ENCODE measurements at regions of chr14 and their contacts with region 1.

Region 1: DNA sequence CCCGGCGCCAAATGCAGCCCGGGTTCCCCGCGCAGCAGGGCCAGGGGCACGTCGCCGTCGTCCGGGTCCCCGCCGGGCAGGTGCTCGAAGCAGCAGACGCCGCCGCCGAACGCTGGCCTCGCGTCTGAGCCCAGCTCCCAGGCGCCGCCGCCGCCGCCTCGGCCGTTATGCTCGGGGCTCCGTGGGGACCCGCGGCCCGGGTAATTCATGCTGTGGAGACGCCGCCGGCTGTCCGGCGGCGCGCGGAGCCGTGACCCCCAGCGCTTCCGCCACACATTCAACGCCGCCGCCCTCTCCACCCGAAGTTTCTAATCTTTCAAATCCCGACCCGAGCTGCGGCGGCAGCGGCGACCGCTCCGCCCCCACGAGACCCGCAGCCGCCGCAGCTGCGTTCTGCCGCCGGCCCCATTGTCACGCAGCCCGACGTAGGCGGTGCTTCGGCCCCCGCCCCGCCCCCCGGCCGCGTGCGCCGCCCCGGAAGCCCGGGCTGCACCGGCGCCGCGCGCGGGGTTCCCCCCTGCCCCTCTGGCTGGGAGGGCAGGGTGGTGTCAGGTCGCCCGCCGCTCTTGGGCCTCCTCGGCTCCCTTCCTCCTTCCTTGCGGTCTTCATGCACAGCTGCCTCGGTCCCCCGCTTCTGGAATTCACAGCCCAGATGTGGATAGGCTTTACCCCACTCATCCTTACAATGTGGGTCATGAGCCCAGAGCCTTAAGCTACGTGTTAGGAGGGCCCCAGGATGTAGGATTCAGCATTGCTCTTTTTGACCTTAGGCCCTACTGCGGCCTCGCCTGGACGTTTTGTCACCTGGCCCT is at the start of gene DDHD1:
- DNase-seq: peak; percentile 33 to 85
- H3K4me3 ChIP-seq: peak within 1 kb of the TSS; percentile 72 to 86 (median 78)
- H3K27ac ChIP-seq: no peak within 1 kb of the TSS
- H3K4me1 ChIP-seq: peaks cover 0 to 3% (median 2%) of the 10 kb centered on the region in 4 experiments; a peak in 4 of 7 replicates
- H3K27me3 ChIP-seq: no peaks in the 10 kb centered on the region; a peak in 1 of 7 replicates
- CTCF ChIP-seq: no peak
- EP300 ChIP-seq: no peak
- POLR2A ChIP-seq: peak; percentile 55 to 80
- RAD21 ChIP-seq: no peak
- total RNA-seq, gene DDHD1: 14.0 and 16.0 TPM in 2 replicates

Region 2: GRCh38 chr14:52950898-52951689 is 202.0 kb before region 1 on chr14 and contains the start of gene FERMT2:
- CTCF ChIA-PET with region 1: no interaction called
- POLR2A ChIA-PET with region 1: interaction called, 10 read pairs
- DNase-seq: peak in 1 of 2 experiments; percentile 91
- H3K4me3 ChIP-seq: peak within 1 kb of the TSS; percentile 66 to 99 (median 96)
- H3K27ac ChIP-seq: peak within 1 kb of the TSS; percentile 96
- H3K4me1 ChIP-seq: peaks cover 3 to 9% (median 5%) of the 10 kb centered on the region in 4 experiments; a peak in 5 of 7 replicates
- H3K27me3 ChIP-seq: no peaks in the 10 kb centered on the region
- CTCF ChIP-seq: no peak
- EP300 ChIP-seq: no peak
- POLR2A ChIP-seq: peak; percentile 23 to 49; a peak in 1 of 3 replicates
- RAD21 ChIP-seq: no peak
- total RNA-seq, gene FERMT2: 120 and 142 TPM in 2 replicates

Region 3: GRCh38 chr14:53124786-53125185 is 28.3 kb before region 1 on chr14:
- CTCF ChIA-PET with region 1: no interaction called
- POLR2A ChIA-PET with region 1: no interaction called
- DNase-seq: no peak
- H3K4me3 ChIP-seq: no peak overlapping the region
- H3K27ac ChIP-seq: no peak overlapping the region
- H3K4me1 ChIP-seq: no peaks in the 10 kb centered on the region
- H3K27me3 ChIP-seq: no peaks in the 10 kb centered on the region
- CTCF ChIP-seq: no peak
- EP300 ChIP-seq: no peak
- POLR2A ChIP-seq: no peak
- RAD21 ChIP-seq: no peak

Region 4: DNA sequence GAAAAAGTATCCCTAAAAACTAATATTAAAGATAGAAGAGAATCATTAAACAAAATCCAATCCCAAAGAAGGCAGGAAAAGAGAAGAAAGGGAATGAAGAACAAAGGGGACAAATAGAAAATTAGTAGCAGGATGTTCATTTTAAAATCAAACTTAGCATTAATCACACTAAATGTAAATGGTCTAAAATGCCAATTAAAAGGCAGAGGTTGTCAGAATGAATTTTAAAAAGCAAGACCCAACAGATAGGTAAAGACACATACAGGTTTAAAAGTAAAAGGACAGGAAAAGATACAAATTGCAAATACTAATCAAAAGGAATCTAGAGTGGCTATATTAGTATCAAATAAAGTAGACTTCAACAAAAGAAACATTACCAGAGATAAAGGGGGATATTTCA is 12.5 kb before region 1 on chr14:
- CTCF ChIA-PET with region 1: interaction called, 4 read pairs
- POLR2A ChIA-PET with region 1: interaction called, 22 read pairs
- DNase-seq: no peak
- H3K4me3 ChIP-seq: no peak overlapping the region
- H3K27ac ChIP-seq: no peak overlapping the region
- H3K4me1 ChIP-seq: 0 out of 7 replicates have a peak, but pooled peaks cover 0 to 3% (median 0%) of the 10 kb centered on the region in 4 experiments
- H3K27me3 ChIP-seq: no peaks in the 10 kb centered on the region
- CTCF ChIP-seq: no peak
- EP300 ChIP-seq: no peak
- POLR2A ChIP-seq: no peak
- RAD21 ChIP-seq: no peak

Region 5: GRCh38 chr14:53273671-53274072 is 120.6 kb after region 1 on chr14:
- CTCF ChIA-PET with region 1: no interaction called
- POLR2A ChIA-PET with region 1: no interaction called
- DNase-seq: no peak
- H3K4me3 ChIP-seq: no peak overlapping the region
- H3K27ac ChIP-seq: no peak overlapping the region
- H3K4me1 ChIP-seq: no peaks in the 10 kb centered on the region
- H3K27me3 ChIP-seq: no peaks in the 10 kb centered on the region
- CTCF ChIP-seq: no peak
- EP300 ChIP-seq: no peak
- POLR2A ChIP-seq: no peak
- RAD21 ChIP-seq: no peak